CD4-positive, alpha-beta memory T cell (primary cell): ENCODE measurements at regions of chr4 and their contacts with region 1.

Region 1: DNA sequence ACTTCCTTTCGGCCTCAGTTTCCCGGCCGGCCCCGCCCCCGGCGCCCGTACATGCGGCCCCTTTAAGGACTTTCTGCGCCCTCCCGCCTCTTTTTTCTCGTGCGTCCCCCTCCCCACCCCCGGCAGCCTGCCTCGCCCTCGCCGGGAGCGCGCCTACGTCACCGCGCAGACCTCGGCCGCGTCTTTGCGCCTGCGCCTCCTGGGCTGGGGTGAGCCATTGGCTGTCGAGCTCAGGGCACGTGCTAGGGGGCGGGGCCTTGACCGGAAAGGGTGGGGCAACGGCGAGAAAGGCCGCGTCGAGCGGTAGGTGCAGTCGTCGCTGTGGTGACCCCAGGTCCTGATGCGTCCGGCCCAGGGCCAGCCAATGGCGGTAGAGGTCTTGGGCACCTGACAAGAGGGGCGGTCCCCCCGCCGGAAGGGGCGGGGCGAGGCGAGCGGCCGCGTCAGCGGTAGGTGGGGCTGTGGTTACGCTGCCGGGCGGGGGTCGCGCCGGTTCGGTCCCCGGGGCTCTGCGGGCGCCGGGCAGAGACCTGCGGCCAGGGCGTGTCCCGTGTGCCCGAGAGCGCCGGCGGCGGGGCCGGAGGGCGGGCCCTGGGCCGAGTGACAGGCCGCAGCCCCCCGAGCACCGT is at the start of gene UVSSA:
- DNase-seq: peak; percentile 100
- H3K4me3 ChIP-seq: peak within 1 kb of the TSS; percentile 36 to 81
- H3K4me3 Mint-ChIP-seq: peak within 1 kb of the TSS; percentile 91 to 98 (median 95)
- H3K27ac ChIP-seq: peak within 1 kb of the TSS; percentile 83
- H3K27ac Mint-ChIP-seq: peak within 1 kb of the TSS; percentile 91 to 98 (median 95)
- H3K4me1 ChIP-seq: peaks cover 34% of the 10 kb centered on the region
- H3K4me1 Mint-ChIP-seq: peaks cover 25 to 60% (median 29%) of the 10 kb centered on the region in 4 donors
- H3K27me3 ChIP-seq: no peaks in the 10 kb centered on the region
- H3K27me3 Mint-ChIP-seq: no peaks in the 10 kb centered on the region
- total RNA-seq, gene UVSSA: 44.4 to 44.6 TPM

Region 2: DNA sequence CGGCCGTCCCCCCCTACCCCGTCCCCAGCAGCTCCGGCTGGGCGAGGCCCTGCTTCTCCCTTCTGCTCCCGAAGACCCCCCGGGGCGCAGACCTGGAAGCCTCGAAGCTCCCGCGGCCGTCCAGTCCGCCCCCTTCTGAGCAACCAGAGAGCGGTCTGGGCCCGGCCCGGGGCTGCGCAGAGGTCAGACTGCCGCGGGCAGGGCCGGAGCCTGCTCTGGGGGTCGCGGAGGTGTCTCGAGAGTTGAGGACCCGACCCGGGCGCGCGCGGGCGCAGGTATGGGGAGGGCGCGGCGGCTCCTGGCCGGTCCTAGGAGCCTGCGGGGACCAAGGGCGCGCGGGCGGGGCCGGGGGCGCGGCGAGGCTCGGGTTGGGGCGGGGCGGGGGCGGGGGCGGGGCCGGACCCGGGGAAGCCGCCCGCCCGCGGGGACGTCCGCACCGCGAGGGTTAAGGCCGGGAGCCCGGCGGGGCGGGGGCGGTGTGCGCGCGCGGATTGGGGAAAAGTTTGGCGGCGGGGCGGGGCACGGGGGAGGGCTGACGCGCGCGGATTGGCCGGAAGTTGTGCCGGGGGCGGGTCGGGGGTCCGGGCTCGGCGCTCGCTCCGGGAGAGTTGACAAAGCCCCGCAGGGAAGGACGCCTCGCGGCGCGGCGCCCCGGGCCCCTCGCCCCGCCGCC is 335.7 kb before region 1 on chr4 and contains the start of gene FGFRL1:
- CTCF ChIA-PET with region 1: no interaction called
- POLR2A ChIA-PET with region 1: interaction called, 7 read pairs
- intact Hi-C with region 1: loop called (anchors 2 kb)
- DNase-seq: peak; percentile 86 to 90 (median 87)
- H3K4me3 ChIP-seq: peak within 1 kb of the TSS; percentile 22 to 75
- H3K4me3 Mint-ChIP-seq: peak within 1 kb of the TSS; percentile 85 to 94 (median 90)
- H3K27ac ChIP-seq: peak within 1 kb of the TSS; percentile 76
- H3K27ac Mint-ChIP-seq: peak within 1 kb of the TSS; percentile 94 to 98 (median 97)
- H3K4me1 ChIP-seq: peaks cover 25% of the 10 kb centered on the region
- H3K4me1 Mint-ChIP-seq: peaks cover 6 to 17% (median 13%) of the 10 kb centered on the region in 4 donors
- H3K27me3 ChIP-seq: peaks cover 7% of the 10 kb centered on the region
- H3K27me3 Mint-ChIP-seq: peaks cover 14 to 23% of the 10 kb centered on the region in 2 donors
- total RNA-seq, gene FGFRL1: 22.4 TPM

Region 3: DNA sequence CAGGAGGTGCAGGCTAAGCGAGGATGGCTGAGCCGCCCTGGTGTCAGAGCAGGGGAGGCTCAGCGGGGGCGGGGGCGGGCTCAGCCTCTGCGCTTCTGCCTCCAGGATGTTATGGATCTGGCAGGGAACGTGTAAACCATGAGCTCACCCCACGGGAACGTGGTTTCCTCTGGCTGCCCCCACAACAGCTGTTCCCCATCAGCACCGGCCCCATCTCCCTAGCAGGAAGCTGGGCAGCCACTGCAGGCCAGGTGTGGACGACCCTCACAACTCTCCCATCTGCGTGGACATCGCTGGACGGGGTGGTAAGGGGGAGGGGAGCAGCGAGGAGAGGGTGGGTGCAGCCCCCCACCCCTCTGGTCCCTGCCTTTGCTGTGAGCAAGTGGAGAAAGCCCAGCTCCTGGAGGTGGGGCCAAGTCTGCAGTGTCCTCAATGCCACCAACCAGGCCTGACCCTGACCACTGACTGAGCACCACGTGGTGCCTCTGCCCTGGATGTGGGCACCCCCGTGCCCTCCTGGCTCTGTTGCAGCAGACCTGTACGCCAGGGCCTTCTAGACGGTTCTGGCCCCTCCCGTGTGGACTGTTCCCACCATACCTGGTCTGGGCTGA is 146.4 kb before region 1 on chr4:
- CTCF ChIA-PET with region 1: interaction called, 5 read pairs
- POLR2A ChIA-PET with region 1: interaction called, 5 read pairs
- intact Hi-C with region 1: loop called (anchors 1 kb)
- DNase-seq: no peak
- H3K4me3 ChIP-seq: peak overlapping the region; percentile 49 to 58
- H3K4me3 Mint-ChIP-seq: peak overlapping the region; percentile 68 to 89 (median 82)
- H3K27ac ChIP-seq: peak overlapping the region; percentile 50
- H3K27ac Mint-ChIP-seq: peak overlapping the region; percentile 64 to 100 (median 98)
- H3K4me1 ChIP-seq: peaks cover 56% of the 10 kb centered on the region
- H3K4me1 Mint-ChIP-seq: peaks cover 23 to 61% (median 40%) of the 10 kb centered on the region in 4 donors
- H3K27me3 ChIP-seq: no peaks in the 10 kb centered on the region
- H3K27me3 Mint-ChIP-seq: no peaks in the 10 kb centered on the region

Region 4: DNA sequence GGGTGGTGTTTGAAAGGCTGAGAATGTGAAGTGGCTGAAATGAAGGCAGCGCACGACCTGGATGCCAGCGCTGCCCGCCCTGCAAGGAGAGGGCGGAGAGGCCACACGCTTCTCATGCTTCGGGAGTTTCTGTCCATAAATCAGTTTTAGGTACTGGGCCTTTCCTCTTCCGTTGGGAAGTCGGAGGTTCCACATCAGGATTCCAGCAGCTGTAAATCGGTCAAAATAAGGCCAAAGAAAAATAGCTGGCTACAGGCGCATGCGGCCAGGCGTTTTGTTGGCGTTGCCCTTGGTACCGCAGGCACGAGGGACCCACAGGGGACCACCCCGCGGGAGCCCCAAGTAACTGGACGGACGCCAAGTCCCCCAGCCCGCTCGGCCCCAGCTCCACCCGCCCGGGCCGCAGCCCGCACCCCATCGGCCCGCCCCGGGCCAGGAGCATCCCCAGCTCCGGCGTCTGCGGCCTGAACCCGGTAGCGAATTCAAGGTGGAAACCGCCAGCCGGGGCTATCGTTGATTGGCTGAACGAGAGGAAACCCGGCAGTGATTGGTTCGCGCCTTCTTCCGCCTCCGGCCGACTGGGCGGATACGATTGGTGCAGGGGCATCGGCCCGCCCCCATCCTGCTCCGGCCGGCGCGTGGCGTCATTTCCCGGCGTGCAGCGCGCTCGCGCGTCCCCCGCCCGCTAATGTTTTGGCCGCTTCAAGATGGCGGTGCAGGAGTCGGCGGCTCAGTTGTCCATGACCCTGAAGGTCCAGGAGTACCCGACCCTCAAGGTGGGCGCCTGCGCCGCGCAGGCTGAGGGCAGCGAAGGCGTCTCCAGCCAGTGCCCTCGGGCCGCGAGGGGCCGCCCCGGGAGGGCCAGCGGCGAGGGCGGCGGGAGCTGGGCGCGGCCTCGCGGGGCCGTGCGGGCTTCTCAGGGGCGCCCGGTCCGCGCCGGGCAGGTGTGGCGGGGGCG is 57.4 kb before region 1 on chr4 and contains the start of gene MAEA:
- CTCF ChIA-PET with region 1: interaction called, 12 read pairs
- POLR2A ChIA-PET with region 1: interaction called, 43 read pairs
- intact Hi-C with region 1: loop called (anchors 1 kb)
- DNase-seq: peak; percentile 97
- H3K4me3 ChIP-seq: peak within 1 kb of the TSS; percentile 78 to 86
- H3K4me3 Mint-ChIP-seq: peak within 1 kb of the TSS; percentile 90 to 94 (median 92)
- H3K27ac ChIP-seq: peak within 1 kb of the TSS; percentile 76
- H3K27ac Mint-ChIP-seq: peak within 1 kb of the TSS; percentile 82 to 97 (median 95)
- H3K4me1 ChIP-seq: peaks cover 49% of the 10 kb centered on the region
- H3K4me1 Mint-ChIP-seq: peaks cover 25 to 48% (median 39%) of the 10 kb centered on the region in 4 donors
- H3K27me3 ChIP-seq: no peaks in the 10 kb centered on the region
- H3K27me3 Mint-ChIP-seq: no peaks in the 10 kb centered on the region
- total RNA-seq, gene MAEA: 101 to 106 TPM

Region 5: DNA sequence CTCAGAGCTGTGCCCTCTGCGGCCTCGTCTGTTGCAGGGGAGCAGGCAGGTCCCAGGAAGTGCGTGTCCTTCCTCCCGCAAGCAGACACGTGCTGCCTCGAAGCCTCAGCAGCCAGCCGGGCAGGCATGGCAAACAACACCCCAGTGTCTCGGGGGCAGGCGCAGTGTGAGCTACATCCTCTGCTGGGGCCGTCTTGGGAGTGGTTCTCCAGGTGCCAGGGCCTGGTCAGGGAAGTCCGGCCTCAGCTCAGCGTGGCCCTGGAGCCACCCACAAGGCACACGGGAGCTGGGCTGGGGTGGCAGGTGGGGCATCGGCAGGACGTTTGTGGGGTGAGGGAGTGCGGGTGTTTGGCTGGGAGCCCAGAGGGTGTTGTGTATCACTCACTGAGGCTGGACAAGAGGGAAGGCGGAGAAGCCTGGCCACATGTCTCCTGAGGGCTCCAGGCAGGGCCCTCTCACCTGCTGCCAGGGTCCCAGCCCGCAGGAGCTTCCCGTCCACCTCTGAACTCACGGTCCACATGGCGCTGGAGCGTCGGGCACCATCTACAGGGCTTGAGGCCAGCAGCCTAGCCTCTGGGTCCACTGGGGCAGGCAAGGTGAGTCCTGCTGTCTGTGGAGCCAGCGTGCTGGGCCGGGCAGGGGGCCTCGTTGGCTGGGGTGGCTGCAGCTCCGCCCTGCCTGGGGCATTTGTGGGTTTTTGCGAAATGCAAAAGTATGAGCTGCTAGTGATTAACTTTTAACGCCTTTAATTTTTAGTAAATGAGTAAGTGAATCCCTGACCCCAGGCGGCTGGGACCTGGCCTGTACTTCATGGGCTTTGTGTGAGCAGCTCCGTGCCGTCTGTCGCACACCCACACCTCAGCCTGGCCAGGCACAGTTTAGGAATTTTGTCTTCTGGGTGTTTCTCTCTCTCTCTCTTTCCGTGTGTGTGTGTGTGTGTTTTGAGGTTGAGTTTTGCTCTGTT is 17.2 kb before region 1 on chr4:
- CTCF ChIA-PET with region 1: interaction called, 21 read pairs
- POLR2A ChIA-PET with region 1: interaction called, 93 read pairs
- intact Hi-C with region 1: loop called (anchors 1 kb)
- DNase-seq: peak; percentile 51 to 77 (median 57)
- H3K4me3 ChIP-seq: no peak overlapping the region
- H3K4me3 Mint-ChIP-seq: peak overlapping the region; percentile 26 to 88 (median 82)
- H3K27ac ChIP-seq: peak overlapping the region; percentile 47
- H3K27ac Mint-ChIP-seq: peak overlapping the region; percentile 86 to 100 (median 97)
- H3K4me1 ChIP-seq: peaks cover 46% of the 10 kb centered on the region
- H3K4me1 Mint-ChIP-seq: peaks cover 18 to 53% (median 32%) of the 10 kb centered on the region in 4 donors
- H3K27me3 ChIP-seq: no peaks in the 10 kb centered on the region
- H3K27me3 Mint-ChIP-seq: no peaks in the 10 kb centered on the region

Region 6: DNA sequence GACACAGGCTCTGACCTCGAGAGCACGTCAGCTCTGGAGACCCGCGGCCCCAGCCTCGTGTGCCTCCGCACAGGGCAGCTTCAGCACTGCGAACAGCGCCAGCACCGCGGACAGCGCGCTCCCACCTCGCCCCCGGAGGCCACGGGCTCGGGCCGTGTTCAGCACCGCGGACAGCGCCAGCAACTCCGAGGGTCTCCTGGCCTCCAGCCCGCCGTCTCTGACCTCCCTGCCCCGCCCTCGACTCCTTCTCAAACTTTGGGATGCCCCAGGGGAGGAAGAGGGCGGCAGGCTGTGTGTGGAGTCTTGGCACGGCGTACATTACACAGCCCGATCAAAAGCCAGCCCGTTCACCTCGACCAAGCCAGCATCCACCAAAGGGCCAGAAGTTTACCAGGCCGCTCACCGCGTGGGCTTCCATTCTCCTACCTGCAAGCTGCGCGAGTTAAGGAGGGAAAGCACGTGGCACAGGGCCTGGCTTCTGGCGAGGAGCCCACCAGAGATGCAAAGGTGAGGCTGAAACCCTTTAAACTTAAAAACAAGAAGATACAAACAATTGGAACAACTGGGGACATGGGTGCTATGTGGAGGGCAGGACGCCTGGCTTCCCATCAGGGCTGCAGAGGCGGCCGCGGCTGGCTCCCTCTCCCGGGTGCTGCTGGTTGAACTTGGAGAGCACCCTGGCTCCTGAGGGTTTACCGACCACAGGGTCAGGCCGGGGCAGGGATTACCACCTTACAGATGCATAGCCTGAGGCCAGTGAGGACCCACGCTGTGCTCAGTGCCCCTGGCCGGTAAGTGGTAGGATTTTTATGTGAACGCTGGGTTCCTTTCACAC is 63.8 kb after region 1 on chr4:
- CTCF ChIA-PET with region 1: no interaction called
- POLR2A ChIA-PET with region 1: no interaction called
- intact Hi-C with region 1: no loop called
- DNase-seq: peak in 3 of 5 donors; percentile 28 to 32 (median 31)
- H3K4me3 ChIP-seq: no peak overlapping the region
- H3K4me3 Mint-ChIP-seq: no peak overlapping the region
- H3K27ac ChIP-seq: no peak overlapping the region
- H3K27ac Mint-ChIP-seq: no peak overlapping the region
- H3K4me1 ChIP-seq: no peaks in the 10 kb centered on the region
- H3K4me1 Mint-ChIP-seq: peaks cover 2 to 11% (median 3%) of the 10 kb centered on the region in 4 donors
- H3K27me3 ChIP-seq: peaks cover 4% of the 10 kb centered on the region
- H3K27me3 Mint-ChIP-seq: peaks cover 32 to 44% of the 10 kb centered on the region in 2 donors

Region 7: GRCh38 chr4:1721004-1721665 is 374.2 kb after region 1 on chr4 and contains the starts of genes TACC3 and TMEM129:
- CTCF ChIA-PET with region 1: no interaction called
- POLR2A ChIA-PET with region 1: interaction called, 11 read pairs
- intact Hi-C with region 1: no loop called
- DNase-seq: peak; percentile 95 to 98 (median 97)
- H3K4me3 ChIP-seq: peak within 1 kb of the TSS; percentile 52 to 69
- H3K4me3 Mint-ChIP-seq: peak within 1 kb of the TSS; percentile 87 to 94 (median 90)
- H3K27ac ChIP-seq: peak within 1 kb of the TSS; percentile 69
- H3K27ac Mint-ChIP-seq: peak within 1 kb of the TSS; percentile 95 to 99 (median 98)
- H3K4me1 ChIP-seq: peaks cover 62% of the 10 kb centered on the region
- H3K4me1 Mint-ChIP-seq: peaks cover 32 to 62% (median 47%) of the 10 kb centered on the region in 4 donors
- H3K27me3 ChIP-seq: no peaks in the 10 kb centered on the region
- H3K27me3 Mint-ChIP-seq: no peaks in the 10 kb centered on the region
- total RNA-seq, gene TACC3: 134 to 136 TPM
- total RNA-seq, gene TMEM129: 40.6 to 42.1 TPM